ENCODE measurements at regions of chr2 and their contacts with region 1.

Region 1: GRCh38 chr2:172496160-172496608 is 59.7 kb upstream of the PDK1 start:
- DNase-seq: no peak
- H3K4me3 ChIP-seq: no peak overlapping the region
- H3K27ac ChIP-seq: no peak overlapping the region
- H3K4me1 ChIP-seq: no peaks in the 10 kb centered on the region
- H3K27me3 ChIP-seq: no peaks in the 10 kb centered on the region
- CTCF ChIP-seq: no peak
- EP300 ChIP-seq: no peak
- POLR2A ChIP-seq: no peak

Region 2: DNA sequence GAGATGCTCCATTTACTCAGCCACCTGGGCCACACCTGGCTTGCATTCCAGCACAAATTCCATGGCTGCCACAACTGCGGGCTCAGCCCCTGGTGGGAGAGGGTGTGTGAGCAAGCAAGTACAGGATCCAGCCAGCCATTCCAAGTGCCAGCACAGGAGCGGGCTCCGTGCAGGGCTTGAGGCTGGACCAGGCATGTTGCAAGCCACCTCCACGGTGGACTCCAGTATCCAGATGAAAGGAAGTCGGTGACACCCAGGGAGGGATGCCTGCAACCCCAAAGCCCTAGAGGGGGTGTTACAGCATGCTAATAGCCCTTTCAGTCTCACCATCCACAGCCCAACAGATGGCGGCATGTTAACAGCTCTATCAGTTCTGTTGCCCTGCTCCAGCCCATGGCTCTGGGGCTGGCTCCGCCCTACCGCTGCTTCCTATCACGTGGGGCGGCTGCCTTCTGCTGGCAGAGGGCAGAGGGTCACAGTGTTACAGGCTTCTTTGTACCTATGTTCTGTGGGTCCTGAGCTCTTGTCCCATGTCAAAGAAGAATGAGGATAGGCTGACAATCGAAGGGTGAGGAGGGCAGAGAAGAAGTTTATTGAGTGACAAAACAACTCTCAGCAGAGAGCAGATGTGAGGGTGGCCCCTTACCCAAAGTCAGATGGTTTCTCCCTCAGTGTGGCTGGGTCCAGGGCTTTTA is 1578.8 kb before region 1 on chr2:
- intact Hi-C with region 1: loop called in 1 of 4 experiments (anchors 10 kb)
- DNase-seq: no peak
- H3K4me3 ChIP-seq: no peak overlapping the region
- H3K27ac ChIP-seq: no peak overlapping the region
- H3K4me1 ChIP-seq: no peaks in the 10 kb centered on the region
- H3K27me3 ChIP-seq: no peaks in the 10 kb centered on the region
- CTCF ChIP-seq: no peak
- EP300 ChIP-seq: no peak
- POLR2A ChIP-seq: no peak

Region 3: GRCh38 chr2:172540421-172540820 is 44.2 kb after region 1 on chr2:
- intact Hi-C with region 1: loop called in 1 of 4 experiments (anchors 1 kb)
- DNase-seq: no peak
- H3K4me3 ChIP-seq: no peak overlapping the region
- H3K27ac ChIP-seq: no peak overlapping the region
- H3K4me1 ChIP-seq: no peaks in the 10 kb centered on the region
- H3K27me3 ChIP-seq: no peaks in the 10 kb centered on the region
- CTCF ChIP-seq: no peak
- EP300 ChIP-seq: no peak
- POLR2A ChIP-seq: no peak